Activated T-helper 2 cell treated with anti-CD3 and anti-CD28 coated beads, Interferon-gamma antibody, Interleukin-2, Interleukin-4, amounts not matched to agents 10 μg/mL and 5 μg/mL and 100 μg/mL, durations not matched to agents 14 hours and 24 hours and 36 hours (primary cell): ENCODE measurements at regions of chr2 and their contacts with region 1.

Region 1: DNA sequence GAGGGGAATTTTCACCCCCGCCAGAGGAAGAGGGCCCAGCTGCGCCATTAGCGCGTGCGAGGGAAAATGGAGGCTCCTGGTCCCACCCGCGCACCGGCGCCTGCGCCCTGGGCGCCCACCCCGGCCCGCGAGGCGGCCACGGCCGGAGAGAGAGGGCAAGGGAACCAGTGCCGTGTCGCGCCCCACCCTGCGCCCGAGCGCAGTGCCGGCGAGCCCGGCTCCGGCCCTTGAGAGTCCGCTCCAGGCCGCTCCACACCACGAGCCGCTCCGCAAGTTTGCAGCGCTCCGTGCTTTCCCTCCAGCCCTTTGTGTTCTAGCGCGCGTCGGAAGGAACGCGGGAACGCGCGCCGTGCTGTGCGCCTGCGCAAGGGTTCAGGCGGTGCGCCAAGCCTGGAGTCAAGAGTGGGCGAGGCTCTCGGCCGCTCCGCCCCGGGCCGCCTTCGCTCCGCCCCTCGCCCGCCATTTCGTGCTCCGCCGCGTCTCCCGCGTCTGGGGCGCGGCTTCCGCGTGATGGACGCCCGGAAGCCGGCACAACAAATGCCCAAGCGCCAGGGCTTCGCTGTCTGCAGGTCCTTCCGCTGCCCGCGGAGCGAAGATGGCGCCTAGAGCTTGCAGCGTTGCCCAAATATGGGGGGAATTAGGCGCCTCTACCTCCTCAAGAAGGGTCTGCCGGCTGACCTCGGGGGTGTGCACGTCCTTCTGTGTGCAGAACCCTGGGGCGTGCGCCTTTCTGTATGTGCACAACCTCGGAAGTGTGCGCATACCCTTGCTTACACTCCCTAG is 46.1 kb upstream of the PTMA start:
- DNase-seq: peak; percentile 98
- H3K4me3 Mint-ChIP-seq: peak overlapping the region; percentile 56
- H3K27ac Mint-ChIP-seq: peak overlapping the region; percentile 93
- H3K4me1 Mint-ChIP-seq: peaks cover 14% of the 10 kb centered on the region
- H3K27me3 Mint-ChIP-seq: no peaks in the 10 kb centered on the region

Region 2: DNA sequence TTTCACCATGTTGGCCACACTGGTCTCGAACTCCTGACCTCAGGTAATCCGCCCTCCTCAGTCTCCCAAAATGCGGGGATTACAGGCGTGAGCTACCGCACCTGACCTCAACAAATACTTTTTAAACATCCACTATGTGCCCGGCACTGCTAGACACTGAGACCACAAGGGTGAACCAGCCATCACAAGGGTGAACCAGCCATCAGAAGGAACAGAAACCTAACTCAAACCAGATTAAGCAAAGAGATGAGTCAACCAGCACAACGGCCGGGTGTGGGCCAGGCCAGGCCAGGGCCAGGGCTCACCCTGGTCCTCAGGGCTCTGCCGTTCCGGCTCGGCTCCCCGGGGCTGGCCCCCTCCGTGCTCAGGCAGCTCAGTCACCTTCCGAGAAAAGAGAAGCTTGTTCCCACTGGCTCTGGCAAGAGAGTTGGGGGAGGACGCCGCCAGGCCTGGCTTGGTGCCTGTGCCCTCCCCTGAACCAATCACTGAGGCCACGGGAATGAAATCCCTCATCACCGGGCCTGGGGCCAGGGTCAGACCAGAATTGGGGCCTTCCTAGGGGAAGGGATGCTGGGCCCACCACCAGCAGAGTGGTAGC is 65.1 kb before region 1 on chr2:
- intact Hi-C with region 1: no loop called
- DNase-seq: no peak
- H3K4me3 Mint-ChIP-seq: no peak overlapping the region
- H3K27ac Mint-ChIP-seq: no peak overlapping the region
- H3K4me1 Mint-ChIP-seq: peaks cover 3% of the 10 kb centered on the region
- H3K27me3 Mint-ChIP-seq: no peaks in the 10 kb centered on the region

Region 3: DNA sequence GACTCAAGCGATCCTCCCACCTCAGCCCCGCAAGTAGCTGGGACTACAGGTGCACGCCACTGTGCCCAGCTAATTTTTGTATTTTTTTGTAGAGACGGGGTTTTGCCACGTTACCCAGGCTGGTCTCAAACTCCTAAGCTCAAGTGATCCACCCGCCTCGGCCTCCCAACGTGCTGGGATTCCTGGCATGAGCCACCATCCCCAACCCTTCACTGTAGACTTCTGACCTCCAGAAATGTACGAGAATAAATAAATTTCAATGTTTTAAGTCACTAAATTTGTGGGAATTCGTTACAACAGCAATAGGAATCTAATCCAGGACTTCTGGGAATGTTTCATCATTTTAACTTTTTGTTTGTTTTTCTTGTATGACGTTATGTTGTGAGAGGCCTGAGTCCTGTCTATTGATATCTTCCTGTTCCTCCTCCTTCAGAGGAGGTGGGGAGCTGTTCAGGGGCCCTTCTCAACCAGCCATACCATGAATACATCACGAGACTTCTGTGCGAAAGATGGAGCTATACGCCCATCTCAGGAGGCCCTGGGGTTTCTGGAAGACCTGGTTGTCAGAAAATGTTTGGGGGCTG is 29.6 kb before region 1 on chr2:
- intact Hi-C with region 1: no loop called
- DNase-seq: no peak
- H3K4me3 Mint-ChIP-seq: no peak overlapping the region
- H3K27ac Mint-ChIP-seq: no peak overlapping the region
- H3K4me1 Mint-ChIP-seq: peaks cover 5% of the 10 kb centered on the region
- H3K27me3 Mint-ChIP-seq: no peaks in the 10 kb centered on the region

Region 4: DNA sequence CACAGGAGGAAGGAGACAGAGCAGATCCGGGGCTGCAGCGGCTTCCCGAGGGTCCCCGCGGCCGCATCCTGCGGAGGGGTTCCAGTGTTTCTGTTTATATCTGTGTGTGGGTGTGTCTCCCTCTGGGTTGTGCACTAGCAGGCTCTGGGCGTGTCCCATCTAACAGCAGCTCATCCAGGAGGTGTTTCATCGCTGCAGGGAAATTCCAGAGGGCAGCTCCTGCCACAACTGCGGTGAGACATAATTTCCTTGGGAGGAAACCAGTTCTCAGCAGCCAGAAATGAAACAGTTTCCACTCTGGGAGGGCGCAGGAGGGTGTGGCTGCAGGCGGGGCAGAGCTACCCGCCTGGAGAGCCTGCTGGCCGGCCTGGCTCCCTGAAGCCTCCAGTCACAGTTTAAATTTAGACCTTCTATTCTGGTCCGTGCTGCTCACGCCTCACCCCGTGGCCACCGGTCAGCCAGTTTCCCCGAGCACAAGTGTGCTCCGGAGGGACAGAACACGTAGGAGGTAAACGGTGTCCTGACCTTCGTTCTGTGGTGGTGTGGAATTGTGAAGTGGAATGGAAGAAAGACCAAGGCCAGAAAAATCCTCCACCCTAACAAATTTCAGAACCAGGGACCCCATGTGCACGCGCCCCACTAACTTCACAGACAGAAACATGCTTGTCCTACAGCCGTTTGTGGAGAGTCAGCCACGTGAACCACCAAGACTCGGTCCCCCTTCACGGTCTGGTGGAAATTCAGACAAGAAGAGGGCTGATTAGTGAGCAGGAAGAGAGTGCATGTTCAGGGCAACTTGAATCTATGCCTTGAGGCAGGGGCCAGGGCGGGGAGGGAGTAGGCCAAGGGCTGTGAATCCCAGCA is 19.4 kb before region 1 on chr2:
- intact Hi-C with region 1: loop called (anchors 1 kb)
- DNase-seq: peak; percentile 68
- H3K4me3 Mint-ChIP-seq: peak overlapping the region; percentile 68
- H3K27ac Mint-ChIP-seq: peak overlapping the region; percentile 91
- H3K4me1 Mint-ChIP-seq: peaks cover 14% of the 10 kb centered on the region
- H3K27me3 Mint-ChIP-seq: no peaks in the 10 kb centered on the region